ENCODE measurements at regions of chr5 and their contacts with region 1.

Region 1: GRCh38 chr5:148794729-148795561 is 31.5 kb upstream of the ADRB2 start:
- DNase-seq: no peak
- H3K4me3 ChIP-seq: no peak overlapping the region
- H3K27ac ChIP-seq: no peak overlapping the region
- H3K4me1 ChIP-seq: no peaks in the 10 kb centered on the region
- H3K27me3 ChIP-seq: no peaks in the 10 kb centered on the region
- CTCF ChIP-seq: no peak

Region 2: DNA sequence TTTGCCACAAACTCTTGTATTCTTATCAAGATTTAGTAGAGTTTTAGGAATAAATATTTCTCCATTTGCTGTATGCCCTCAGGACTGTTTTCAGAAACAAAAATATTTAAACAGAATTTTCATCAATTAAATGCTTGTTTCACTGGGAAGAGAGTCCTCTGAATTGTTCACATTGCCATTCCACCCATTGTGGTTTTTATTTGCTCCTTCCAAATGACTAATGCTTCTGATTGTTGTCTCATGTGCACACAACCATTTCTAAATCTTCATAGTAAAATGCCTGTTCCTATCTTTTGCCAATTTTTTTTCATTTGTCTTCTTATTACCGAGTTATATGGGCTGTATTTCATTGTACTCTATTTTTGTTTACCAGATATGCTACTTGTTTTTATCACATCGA is 546.1 kb before region 1 on chr5:
- intact Hi-C with region 1: loop called (anchors 5 kb)
- DNase-seq: no peak
- H3K4me3 ChIP-seq: no peak overlapping the region
- H3K27ac ChIP-seq: no peak overlapping the region
- H3K4me1 ChIP-seq: no peaks in the 10 kb centered on the region
- H3K27me3 ChIP-seq: no peaks in the 10 kb centered on the region
- CTCF ChIP-seq: no peak

Measured in tibial artery (tissue), 4 donors.